ENCODE measurements at regions of chr21 and their contacts with region 1.

Region 1: GRCh38 chr21:29091032-29091431 is 17.6 kb upstream of the CCT8 start:
- DNase-seq: no peak
- ATAC-seq: peak in 1 of 2 donors; percentile 9

Region 2: GRCh38 chr21:29144736-29145353 is 53.8 kb after region 1 on chr21:
- intact Hi-C with region 1: loop called (anchors 5 to 10 kb)
- DNase-seq: no peak
- ATAC-seq: peak in 1 of 2 donors; percentile 40

Region 3: GRCh38 chr21:29155118-29155932 is 64.3 kb after region 1 on chr21:
- intact Hi-C with region 1: loop called in 1 of 2 experiments (anchors 10 kb)
- DNase-seq: peak; percentile 72
- ATAC-seq: peak; percentile 91 to 95

Region 4: GRCh38 chr21:29372063-29372802 is 281.2 kb after region 1 on chr21:
- intact Hi-C with region 1: loop called (anchors 2 to 5 kb)
- DNase-seq: peak; percentile 33
- ATAC-seq: peak; percentile 89 to 91

Region 5: DNA sequence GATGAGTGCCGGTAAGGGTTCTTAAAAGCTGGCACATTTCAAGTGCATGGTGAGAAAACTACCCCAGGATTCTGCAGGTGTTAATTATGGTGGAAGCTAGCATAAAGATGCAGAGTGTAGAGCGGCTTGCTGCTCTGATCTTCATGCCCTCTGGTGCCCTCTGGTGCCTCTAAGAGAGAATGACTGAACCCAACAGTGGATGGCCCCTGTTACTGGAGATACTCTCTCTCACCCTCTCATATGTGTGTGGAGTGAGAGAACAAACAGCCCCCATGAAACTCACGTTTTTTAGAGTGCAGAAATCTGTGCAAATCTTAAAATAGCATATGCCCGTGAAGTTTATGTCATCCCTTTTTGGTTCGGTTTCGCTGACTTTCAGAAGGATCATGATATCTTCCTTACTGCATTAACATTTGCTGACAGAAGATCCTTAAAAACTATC is 758.7 kb after region 1 on chr21:
- intact Hi-C with region 1: loop called in 1 of 2 experiments (anchors 5 kb)
- DNase-seq: peak; percentile 30
- ATAC-seq: peak; percentile 84 to 92